Tibial artery (tissue), 4 donors: ENCODE measurements at regions of chr1 and their contacts with region 1.

Region 1: GRCh38 chr1:206635080-206635977 is at the start of gene DYRK3:
- DNase-seq: peak; percentile 92 to 96
- H3K4me3 ChIP-seq: peak within 1 kb of the TSS; percentile 98 to 99
- H3K27ac ChIP-seq: peak within 1 kb of the TSS; percentile 87 to 90
- H3K4me1 ChIP-seq: peaks cover 0 to 27% (median 12%) of the 10 kb centered on the region in 4 donors
- H3K27me3 ChIP-seq: no peaks in the 10 kb centered on the region
- CTCF ChIP-seq: peak in 1 of 2 experiments; percentile 10

Region 2: DNA sequence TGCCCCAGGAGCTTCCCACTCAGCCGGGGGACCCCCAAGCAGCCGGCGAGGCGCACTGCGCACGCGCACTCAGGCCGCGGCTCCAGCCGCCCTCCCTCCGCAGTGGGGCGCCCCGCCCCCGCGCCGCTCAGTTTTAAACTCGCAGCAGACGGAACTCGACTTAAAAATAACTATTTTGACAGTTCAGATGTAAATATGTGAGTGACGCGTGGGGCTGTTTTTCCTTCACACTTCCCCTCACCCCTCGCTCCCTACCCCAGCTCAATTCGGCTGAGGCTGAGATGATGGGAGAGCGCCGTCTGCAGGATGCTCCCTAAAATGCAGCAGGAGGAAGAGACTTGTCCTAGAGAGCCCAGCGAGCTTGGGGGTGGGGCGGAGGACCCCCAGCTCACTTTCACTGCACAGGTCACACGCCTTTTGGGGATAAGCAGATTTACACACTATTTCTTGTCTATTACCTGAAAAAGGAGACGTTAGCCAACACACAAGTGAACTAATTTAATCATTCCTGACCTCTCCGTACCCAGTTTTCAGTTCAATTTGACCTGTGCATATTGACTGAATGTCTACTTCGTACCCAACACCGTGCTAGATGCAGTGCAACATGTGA is 1204.5 kb before region 1 on chr1:
- intact Hi-C with region 1: no loop called
- DNase-seq: no peak
- H3K4me3 ChIP-seq: peak overlapping the region; percentile 44 to 45
- H3K27ac ChIP-seq: no peak overlapping the region
- H3K4me1 ChIP-seq: peaks cover 0 to 9% (median 7%) of the 10 kb centered on the region in 4 donors
- H3K27me3 ChIP-seq: peaks cover 0 to 36% of the 10 kb centered on the region in 2 donors
- CTCF ChIP-seq: peak; percentile 53 to 58

Region 3: DNA sequence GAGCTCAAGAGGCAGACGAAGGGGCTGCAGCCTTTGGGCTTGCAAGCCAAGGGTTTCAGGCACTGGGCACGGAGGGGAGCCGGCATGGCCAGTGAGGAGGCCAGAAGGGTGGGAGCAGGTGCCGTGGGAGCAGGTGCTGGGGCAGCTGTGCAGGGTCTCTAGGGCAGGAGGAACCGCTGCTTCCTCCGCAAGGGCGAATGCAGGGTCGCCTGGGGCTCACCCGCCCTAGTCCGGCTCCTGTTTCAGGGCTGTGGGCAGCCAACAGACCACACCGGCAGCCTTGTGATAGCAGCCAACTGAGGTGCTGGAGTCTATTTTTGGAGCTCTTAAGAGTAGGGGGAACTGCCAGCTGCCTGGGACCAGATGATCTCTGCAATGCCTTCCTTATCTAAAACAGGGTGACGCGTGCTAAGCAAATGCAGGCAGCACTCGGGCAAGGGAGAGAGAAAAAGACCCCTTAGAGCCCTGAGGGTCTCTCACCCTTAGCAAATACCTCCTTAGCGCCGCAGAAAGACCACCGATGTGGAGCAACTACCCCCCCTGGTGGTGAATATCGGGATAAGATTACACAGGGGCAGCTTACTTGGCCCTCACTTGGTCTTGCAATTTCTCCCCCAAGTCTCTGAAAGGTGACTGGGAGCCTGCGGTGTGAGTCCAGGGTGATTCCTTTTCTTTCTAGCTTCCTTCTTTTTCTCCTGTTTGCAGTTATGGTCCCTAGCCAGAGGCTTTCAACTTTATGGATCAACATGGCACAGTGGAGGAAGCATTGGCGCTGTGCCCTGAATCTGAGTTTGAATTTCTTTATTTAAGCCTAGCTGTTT is 28.7 kb after region 1 on chr1:
- intact Hi-C with region 1: loop called (anchors 2 kb)
- DNase-seq: peak in 1 of 2 donors; percentile 46
- H3K4me3 ChIP-seq: peak overlapping the region in 1 of 2 donors; percentile 12
- H3K27ac ChIP-seq: no peak overlapping the region
- H3K4me1 ChIP-seq: peaks cover 4 to 22% (median 15%) of the 10 kb centered on the region in 4 donors
- H3K27me3 ChIP-seq: no peaks in the 10 kb centered on the region
- CTCF ChIP-seq: peak; percentile 79 to 88

Region 4: DNA sequence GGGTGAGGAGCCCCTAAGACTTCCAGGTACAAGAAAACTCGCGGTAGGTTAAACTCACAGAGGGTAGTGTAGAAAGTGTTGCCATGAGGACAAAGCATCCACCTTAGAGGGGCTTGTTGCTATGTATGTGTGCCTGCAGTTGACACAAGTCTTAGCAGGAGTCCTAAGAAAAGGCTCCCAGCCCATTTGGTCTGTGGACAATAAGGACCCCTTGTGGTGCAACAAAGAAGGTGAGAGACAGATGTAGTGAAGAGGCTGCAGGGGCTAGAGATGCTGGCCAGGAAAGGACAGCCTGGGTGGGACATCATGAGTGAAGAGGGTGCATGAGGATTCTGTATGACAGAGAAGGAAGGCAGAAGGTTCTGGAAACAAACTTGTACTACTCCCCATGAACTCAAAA is 173.3 kb after region 1 on chr1:
- intact Hi-C with region 1: loop called (anchors 10 kb)
- DNase-seq: no peak
- H3K4me3 ChIP-seq: no peak overlapping the region
- H3K27ac ChIP-seq: no peak overlapping the region
- H3K4me1 ChIP-seq: no peaks in the 10 kb centered on the region
- H3K27me3 ChIP-seq: peaks cover 0 to 8% of the 10 kb centered on the region in 2 donors
- CTCF ChIP-seq: peak; percentile 12 to 25

Region 5: DNA sequence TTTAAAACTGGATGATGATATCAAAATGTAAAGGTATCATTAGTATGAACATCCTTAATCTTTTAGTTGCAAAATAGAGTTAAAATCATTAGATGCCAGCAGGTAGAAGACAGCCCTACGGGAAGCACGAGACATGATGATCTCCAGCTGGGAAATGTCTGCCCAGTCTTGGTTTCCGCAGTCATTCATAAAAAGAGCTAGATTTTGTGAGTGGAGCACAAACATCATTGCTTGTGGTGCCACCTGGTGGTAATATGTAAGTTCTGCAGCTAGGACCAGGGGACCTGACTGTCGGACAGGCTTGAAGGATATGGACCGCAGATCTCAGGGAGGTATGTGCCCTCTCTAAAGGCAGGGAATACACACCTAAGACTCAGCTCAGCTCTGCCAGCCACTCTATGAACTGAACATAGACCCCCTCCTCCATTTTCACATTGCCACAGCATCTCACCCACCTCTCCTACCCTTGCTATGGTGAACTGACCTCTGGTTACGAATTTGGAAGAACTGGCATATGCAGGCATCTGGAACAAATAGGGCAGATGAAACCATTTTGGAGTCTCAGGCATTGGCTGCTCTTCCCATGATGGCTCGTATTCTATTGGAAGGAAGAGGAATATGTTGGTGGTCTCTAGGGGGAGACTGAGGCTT is 277.2 kb after region 1 on chr1:
- intact Hi-C with region 1: loop called (anchors 5 kb)
- DNase-seq: peak; percentile 74 to 75
- H3K4me3 ChIP-seq: no peak overlapping the region
- H3K27ac ChIP-seq: no peak overlapping the region
- H3K4me1 ChIP-seq: peaks cover 0 to 14% (median 12%) of the 10 kb centered on the region in 4 donors
- H3K27me3 ChIP-seq: peaks cover 0 to 45% of the 10 kb centered on the region in 2 donors
- CTCF ChIP-seq: peak; percentile 82 to 84